Posterior vena cava (tissue), 2 donors: ENCODE measurements at regions of chr5 and their contacts with region 1.

Region 1: GRCh38 chr5:55104946-55105701 is 2.7 kb downstream of the GZMA start:
- DNase-seq: no peak

Region 2: DNA sequence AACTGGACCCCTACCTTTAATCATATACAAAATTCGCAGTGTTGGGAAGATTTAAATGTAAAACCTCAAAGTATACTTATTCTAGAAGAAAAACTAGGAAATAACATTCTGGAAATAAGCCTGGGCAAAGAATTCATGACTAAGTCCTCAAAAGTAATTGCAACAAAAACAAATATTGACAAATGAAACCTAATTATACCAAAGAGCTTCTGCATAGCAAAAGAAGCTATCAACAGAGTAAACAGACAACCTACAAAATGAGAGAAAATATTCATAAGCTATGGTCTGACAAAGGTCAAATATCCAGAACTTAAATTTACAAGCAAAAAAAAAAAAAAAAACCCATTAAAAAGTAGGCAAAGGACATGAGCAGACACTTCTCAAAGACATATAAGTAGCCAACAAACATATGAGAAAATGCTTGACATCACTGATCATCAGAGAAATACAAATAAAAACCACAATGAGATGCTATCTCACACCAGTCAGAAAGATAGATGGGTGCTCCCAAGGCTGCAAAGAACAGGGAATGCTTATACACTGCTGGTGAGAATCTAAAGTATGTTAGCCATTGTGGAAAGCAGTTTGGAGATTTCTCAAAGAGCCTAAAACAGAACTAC is 1390.7 kb before region 1 on chr5:
- intact Hi-C with region 1: loop called in 1 of 2 experiments (anchors 5 kb)
- DNase-seq: no peak